Sciatic nerve (tissue), 2 donors: ENCODE measurements at regions of chr21 and their contacts with region 1.

Region 1: GRCh38 chr21:14388282-14388681 is 5.3 kb upstream of the HSPA13 start:
- DNase-seq: no peak
- ATAC-seq: no peak

Region 2: DNA sequence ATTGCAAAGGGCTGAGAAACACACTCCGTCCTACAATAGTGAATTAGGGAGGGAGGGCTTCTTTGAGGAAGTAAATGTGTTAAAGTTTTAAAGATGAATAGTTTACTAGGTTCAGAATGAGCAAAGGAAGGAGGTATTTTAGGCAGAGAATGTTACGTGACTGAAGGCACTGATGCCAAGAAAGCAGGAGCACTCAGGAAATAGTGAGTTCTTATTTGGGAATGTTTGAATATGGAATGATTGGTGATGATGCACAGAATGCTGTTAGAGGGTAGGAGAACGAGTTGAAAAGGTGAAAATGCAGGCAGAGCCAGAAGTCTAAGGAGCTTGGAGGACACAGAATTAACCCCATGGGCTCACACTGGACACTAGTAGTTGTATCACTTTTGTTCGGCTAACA is 568.5 kb after region 1 on chr21:
- intact Hi-C with region 1: loop called (anchors 5 kb)
- DNase-seq: no peak
- ATAC-seq: no peak

Region 3: DNA sequence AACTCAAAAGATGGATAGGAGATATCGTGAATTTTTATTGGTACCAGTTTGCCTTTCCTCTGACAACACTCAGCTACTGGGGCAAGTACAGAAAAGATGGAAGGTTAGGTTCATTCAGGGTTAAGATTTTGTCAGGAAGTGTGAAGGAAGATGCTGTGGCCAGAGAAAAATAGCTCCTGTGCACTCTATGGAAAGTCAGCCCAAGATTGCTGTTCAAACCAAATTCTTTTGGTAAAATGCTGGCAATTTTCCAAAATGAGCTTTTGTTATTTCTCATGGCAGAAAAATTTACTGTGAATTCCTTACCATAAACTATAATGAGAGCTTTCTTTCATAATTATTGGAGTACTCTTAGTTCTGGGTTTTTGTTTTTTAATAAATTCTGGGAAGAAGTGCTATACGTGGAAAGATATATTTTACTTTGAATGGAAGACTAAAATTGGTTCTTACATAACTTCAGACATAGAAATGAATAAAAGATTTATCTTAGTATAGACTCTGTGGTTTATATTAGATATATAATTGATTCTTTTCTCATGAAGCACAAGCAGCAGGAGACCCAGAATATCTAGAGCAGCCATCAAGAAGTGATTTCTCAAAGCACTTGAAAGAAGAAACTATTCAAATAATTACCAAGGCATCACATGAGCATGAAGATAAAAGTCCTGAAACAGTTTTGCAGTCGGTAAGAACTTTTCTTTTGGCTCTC is 1453.7 kb after region 1 on chr21:
- intact Hi-C with region 1: no loop called
- DNase-seq: no peak
- ATAC-seq: no peak